ENCODE measurements at regions of chrX and their contacts with region 1.

Region 1: DNA sequence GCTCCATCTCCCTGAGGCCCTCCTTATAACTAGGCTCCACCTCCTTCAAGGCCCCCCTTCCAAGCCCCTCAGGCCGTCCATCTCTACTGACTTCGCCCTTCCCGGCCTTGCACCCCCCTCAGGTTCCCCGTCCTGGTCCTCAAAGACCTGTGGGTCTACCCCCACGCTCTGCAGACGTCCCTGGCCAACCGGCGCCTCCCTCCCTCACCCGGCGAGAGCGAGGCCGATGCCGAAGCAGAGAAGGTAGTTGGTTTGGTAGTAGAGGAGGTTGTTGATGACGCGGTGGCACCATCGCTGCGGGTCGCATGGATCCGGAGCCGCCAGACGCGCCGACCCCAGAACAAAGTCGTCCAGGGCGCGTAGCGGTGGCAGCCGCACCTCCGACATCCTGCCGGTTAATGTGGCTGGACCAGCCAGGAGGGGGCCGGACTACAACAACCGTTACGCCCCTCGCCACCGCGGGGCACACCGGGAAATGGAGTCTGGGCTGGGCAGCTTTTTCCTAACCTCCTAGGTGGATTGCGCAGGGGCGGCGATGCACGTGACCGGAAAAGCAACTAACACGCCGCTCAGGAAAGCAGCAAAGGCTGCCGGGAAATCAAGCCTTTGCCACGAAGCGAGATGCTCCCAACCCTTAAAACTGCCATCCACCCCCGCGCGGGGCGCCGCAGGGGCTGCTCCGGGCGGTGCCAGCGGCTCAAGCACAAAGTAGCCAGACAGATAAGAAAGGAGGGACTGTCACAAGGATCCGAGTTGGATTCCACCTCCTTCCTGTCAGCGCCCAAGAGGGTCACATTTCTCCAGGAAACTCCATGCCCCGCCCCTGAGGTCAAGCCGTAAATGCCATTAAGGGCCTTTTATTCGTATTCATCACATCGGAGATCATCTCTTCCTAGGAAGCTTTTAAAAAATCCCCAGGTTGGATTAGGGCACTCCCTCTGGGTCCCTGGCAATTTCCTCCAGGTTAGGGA is at the start of gene PRAF2:
- DNase-seq: peak; percentile 85 to 93 (median 89)
- H3K4me3 ChIP-seq: peak within 1 kb of the TSS; percentile 36 to 60
- H3K4me3 Mint-ChIP-seq: peak within 1 kb of the TSS; percentile 75 to 86 (median 84)
- H3K27ac ChIP-seq: peak within 1 kb of the TSS; percentile 77
- H3K27ac Mint-ChIP-seq: peak within 1 kb of the TSS; percentile 83 to 93 (median 88)
- H3K4me1 ChIP-seq: peaks cover 20% of the 10 kb centered on the region
- H3K4me1 Mint-ChIP-seq: peaks cover 5 to 28% (median 17%) of the 10 kb centered on the region in 4 donors
- H3K27me3 ChIP-seq: no peaks in the 10 kb centered on the region
- H3K27me3 Mint-ChIP-seq: no peaks in the 10 kb centered on the region
- total RNA-seq, gene PRAF2: 25.4 to 28.9 TPM

Region 2: DNA sequence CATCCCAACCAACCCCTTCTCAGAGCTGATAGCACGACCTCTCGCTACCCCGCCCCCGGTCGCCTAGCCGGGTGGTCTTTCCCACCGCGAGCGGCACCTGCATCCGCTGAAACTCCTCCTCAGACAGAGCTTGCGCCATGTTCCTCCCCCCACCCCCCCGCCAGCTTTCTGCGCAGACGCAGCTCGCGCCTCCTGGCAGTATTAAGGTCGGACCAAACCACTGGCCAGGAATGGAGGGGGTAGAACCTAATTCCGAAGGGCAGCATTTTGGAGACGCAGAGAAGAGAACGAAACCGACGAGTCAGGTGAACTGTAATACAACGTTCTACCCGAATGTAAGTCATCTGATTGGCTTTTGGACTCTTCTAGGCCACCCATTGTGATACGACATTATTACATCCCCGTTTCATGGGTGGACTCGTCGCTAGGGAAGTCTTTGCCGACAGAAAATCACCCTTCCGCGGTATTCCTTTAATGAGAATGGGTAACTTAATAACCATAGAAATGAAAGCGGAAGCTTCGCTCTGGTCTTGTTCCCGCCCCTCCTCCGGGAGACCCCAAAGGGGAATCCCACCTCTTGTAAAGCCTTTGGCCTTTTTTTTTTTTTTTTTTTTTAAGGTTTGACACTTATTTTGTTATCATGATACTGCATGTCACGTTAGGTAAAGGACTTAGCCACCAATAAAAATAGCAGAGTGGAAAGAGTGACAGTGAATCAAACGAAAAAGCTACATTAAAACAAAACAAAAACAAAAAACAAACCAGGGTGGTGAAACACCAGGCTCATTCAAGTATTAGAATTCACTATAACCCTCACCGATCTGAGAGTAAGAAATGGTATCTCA is 71.6 kb before region 1 on chrX and contains the start of gene GRIPAP1:
- CTCF ChIA-PET with region 1: no interaction called
- POLR2A ChIA-PET with region 1: no interaction called
- intact Hi-C with region 1: loop called (anchors 1 kb)
- DNase-seq: peak; percentile 82 to 94 (median 86)
- H3K4me3 ChIP-seq: peak within 1 kb of the TSS; percentile 79 to 86
- H3K4me3 Mint-ChIP-seq: peak within 1 kb of the TSS; percentile 91 to 99 (median 97)
- H3K27ac ChIP-seq: peak within 1 kb of the TSS; percentile 97
- H3K27ac Mint-ChIP-seq: peak within 1 kb of the TSS; percentile 93 to 99 (median 98)
- H3K4me1 ChIP-seq: peaks cover 27% of the 10 kb centered on the region
- H3K4me1 Mint-ChIP-seq: peaks cover 17 to 36% (median 27%) of the 10 kb centered on the region in 4 donors
- H3K27me3 ChIP-seq: no peaks in the 10 kb centered on the region
- H3K27me3 Mint-ChIP-seq: no peaks in the 10 kb centered on the region
- total RNA-seq, gene GRIPAP1: 99.6 to 111 TPM

Region 3: GRCh38 chrX:49100704-49101628 is 27.1 kb after region 1 on chrX:
- CTCF ChIA-PET with region 1: no interaction called
- POLR2A ChIA-PET with region 1: interaction called, 16 read pairs
- intact Hi-C with region 1: loop called (anchors 2 kb)
- DNase-seq: peak; percentile 88 to 91 (median 89)
- H3K4me3 ChIP-seq: peak overlapping the region; percentile 22 to 71
- H3K4me3 Mint-ChIP-seq: peak overlapping the region; percentile 87 to 92 (median 90)
- H3K27ac ChIP-seq: peak overlapping the region; percentile 76
- H3K27ac Mint-ChIP-seq: peak overlapping the region; percentile 93 to 97 (median 94)
- H3K4me1 ChIP-seq: peaks cover 6% of the 10 kb centered on the region
- H3K4me1 Mint-ChIP-seq: peaks cover 0 to 9% (median 4%) of the 10 kb centered on the region in 4 donors
- H3K27me3 ChIP-seq: no peaks in the 10 kb centered on the region
- H3K27me3 Mint-ChIP-seq: no peaks in the 10 kb centered on the region

Region 4: DNA sequence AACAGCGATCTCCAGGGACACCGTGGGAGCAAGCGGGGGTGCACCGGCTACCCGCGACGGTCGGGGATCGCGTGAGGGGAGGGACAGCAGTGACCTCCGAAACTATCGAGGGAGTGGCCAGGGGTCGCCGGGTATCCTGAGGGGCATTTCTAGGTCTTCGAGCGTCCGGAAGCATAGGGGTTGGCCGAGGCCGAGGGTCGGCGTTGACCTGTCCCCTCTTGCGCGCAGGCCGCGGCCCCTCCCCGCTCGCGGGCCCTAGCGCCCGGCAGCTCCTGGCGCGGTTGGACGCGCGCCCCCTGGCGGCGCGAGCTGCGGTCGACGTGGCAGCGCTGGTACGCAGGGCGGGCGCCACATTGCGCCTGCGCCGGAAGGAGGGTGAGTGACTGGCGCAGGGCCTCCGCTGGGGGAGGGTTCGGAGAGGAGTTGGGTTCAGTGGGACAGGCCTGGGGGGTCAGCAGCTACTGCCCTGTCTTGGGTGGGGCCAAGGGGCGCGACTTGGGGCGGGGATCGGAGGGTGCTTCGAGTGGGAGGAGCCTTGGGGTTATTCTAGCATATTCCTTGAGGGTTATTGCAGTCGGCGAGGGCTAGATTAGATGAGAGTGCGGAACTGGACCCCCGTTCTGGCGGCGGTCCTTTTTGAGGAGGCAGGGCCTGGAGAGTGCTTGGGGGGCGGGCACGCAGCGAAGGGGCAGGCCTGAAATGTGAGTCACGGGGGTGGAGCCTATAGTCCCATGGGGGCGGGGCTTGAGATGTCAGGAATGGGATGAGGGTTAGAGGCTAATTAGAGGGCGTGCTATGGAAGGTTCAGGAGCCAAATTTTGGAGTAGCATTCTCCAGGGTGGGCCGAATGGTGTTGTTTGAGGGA is 89.9 kb after region 1 on chrX:
- CTCF ChIA-PET with region 1: no interaction called
- POLR2A ChIA-PET with region 1: interaction called, 9 read pairs
- intact Hi-C with region 1: loop called (anchors 10 kb)
- DNase-seq: peak; percentile 81 to 84 (median 82)
- H3K4me3 ChIP-seq: peak overlapping the region in 1 of 2 donors; percentile 50
- H3K4me3 Mint-ChIP-seq: peak overlapping the region; percentile 70 to 88 (median 80)
- H3K27ac ChIP-seq: peak overlapping the region; percentile 58
- H3K27ac Mint-ChIP-seq: peak overlapping the region; percentile 83 to 95 (median 92)
- H3K4me1 ChIP-seq: peaks cover 41% of the 10 kb centered on the region
- H3K4me1 Mint-ChIP-seq: peaks cover 14 to 41% (median 29%) of the 10 kb centered on the region in 4 donors
- H3K27me3 ChIP-seq: no peaks in the 10 kb centered on the region
- H3K27me3 Mint-ChIP-seq: no peaks in the 10 kb centered on the region

Region 5: DNA sequence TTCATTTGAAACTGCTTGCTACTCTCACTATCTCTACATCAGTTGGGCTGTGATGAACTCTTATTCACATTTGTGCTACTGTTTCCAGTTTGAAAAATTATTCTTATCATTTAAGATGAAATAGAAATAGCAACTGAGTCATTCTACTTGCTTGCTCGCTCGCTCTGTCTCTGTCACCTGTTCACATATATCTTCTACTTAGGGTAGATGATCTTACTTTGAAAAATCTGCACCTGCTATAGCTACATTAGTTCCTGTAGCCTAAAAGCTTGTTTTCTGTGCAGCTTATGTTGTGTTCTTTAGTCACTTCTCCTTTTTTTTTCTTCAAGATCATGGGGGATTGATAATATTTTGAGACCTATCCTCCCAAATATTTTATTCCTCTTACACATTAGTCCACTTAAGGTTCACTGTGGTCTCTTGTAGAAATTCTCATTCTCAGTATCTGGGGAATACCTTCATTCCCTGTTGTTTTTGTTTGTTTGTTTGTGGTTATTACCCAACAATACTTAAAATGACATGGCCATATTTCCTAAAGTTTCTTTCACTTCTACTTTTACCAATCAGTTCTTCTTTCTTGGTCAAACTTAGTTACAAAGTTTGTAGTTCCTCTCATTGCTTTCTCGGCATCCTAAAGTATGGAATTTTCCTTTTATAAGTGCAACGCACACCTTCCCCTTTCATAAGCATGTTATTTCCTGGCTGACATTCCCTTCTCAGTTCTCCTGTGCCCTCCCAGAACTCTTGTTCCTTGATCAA is 885.0 kb after region 1 on chrX:
- CTCF ChIA-PET with region 1: no interaction called
- POLR2A ChIA-PET with region 1: no interaction called
- intact Hi-C with region 1: no loop called
- DNase-seq: no peak
- H3K4me3 ChIP-seq: no peak overlapping the region
- H3K4me3 Mint-ChIP-seq: no peak overlapping the region
- H3K27ac ChIP-seq: no peak overlapping the region
- H3K27ac Mint-ChIP-seq: no peak overlapping the region
- H3K4me1 ChIP-seq: no peaks in the 10 kb centered on the region
- H3K4me1 Mint-ChIP-seq: no peaks in the 10 kb centered on the region
- H3K27me3 ChIP-seq: no peaks in the 10 kb centered on the region
- H3K27me3 Mint-ChIP-seq: no peaks in the 10 kb centered on the region

Measured in CD4-positive, alpha-beta memory T cell (primary cell).